BJ (cell line): ENCODE measurements at regions of chr10 and their contacts with region 1.

Region 1: DNA sequence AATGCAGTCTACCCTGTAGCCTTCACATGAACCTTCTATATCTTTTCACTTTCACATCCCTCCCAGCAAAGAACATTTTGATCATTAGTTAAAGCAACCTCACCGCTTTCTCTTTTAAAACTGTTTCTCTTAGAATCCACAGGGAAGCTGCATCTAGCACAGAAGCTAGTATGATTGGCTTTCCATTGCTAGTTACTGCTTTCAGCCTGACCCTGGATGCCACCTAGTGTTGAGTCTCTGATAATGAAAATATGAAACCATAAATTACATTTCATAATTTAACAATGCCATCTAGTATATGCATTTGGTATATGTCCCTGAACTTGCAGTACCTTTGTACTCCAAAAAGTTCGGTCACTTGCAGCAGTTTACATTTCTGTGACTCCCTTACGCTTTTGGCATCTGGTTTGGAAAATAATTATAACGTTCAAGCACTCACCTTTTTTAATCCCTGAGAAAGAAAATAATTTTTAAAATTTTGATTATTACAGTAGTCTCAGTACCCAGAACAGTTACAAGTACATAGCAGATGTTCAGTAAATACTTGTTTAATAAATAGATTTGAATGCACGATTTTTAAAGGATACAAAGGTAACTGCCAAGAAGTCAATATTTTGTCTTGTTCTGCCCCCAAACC is 22.7 kb downstream of the CISD1 start:
- DNase-seq: no peak
- H3K4me3 ChIP-seq: no peak overlapping the region
- H3K27me3 ChIP-seq: no peaks in the 10 kb centered on the region
- CTCF ChIP-seq: peak; percentile 72

Region 2: GRCh38 chr10:58177362-58177947 is 114.2 kb before region 1 on chr10:
- CTCF ChIA-PET with region 1: interaction called, 128 read pairs
- POLR2A ChIA-PET with region 1: no interaction called
- DNase-seq: no peak
- H3K4me3 ChIP-seq: no peak overlapping the region
- H3K27me3 ChIP-seq: no peaks in the 10 kb centered on the region
- CTCF ChIP-seq: peak; percentile 54

Region 3: DNA sequence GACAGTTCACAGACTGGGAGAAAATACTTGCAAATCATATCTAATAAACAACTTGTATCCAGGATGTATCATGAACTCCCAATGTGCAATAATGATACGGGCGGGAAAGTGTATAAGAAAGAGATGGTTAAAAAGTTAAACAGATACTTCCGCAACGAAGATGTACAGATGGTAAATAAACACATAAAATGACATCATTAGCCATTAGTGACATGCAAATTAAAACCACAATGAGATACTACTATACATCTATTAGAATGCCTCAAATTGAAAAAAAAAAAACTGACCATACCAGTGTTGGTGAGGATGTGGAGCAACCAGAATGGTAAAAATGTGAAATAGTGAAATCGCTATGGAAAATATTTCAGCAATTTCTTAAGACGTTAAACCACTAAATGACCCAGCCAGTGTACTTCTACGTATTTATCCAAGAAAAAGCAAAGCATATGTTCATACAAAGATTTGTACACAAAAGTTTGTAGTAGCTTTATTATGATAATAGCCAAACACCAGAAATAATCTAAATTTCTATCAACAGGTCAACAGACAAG is 107.5 kb before region 1 on chr10:
- CTCF ChIA-PET with region 1: interaction called, 128 read pairs
- POLR2A ChIA-PET with region 1: no interaction called
- DNase-seq: no peak
- H3K4me3 ChIP-seq: no peak overlapping the region
- H3K27me3 ChIP-seq: no peaks in the 10 kb centered on the region
- CTCF ChIP-seq: no peak

Region 4: GRCh38 chr10:58189269-58189668 is 102.4 kb before region 1 on chr10:
- CTCF ChIA-PET with region 1: interaction called, 17 read pairs
- POLR2A ChIA-PET with region 1: no interaction called
- DNase-seq: peak; percentile 40
- H3K4me3 ChIP-seq: no peak overlapping the region
- H3K27me3 ChIP-seq: no peaks in the 10 kb centered on the region
- CTCF ChIP-seq: no peak

Region 5: GRCh38 chr10:58268870-58269605 is 22.6 kb before region 1 on chr10 and contains the start of gene CISD1:
- CTCF ChIA-PET with region 1: interaction called, 12 read pairs
- POLR2A ChIA-PET with region 1: no interaction called
- DNase-seq: peak; percentile 96
- H3K4me3 ChIP-seq: peak within 1 kb of the TSS; percentile 99
- H3K27me3 ChIP-seq: no peaks in the 10 kb centered on the region
- CTCF ChIP-seq: no peak
- polyA plus RNA-seq, gene CISD1: 31.7 and 57.1 TPM in 2 replicates